H1 (cell line): ENCODE measurements at regions of chr12 and their contacts with region 1.

Region 1: GRCh38 chr12:57111031-57111734 is at the start of gene STAT6:
- DNase-seq: no peak
- H3K4me3 ChIP-seq: peak within 1 kb of the TSS; percentile 9 to 59 (median 50)
- H3K27ac ChIP-seq: peak within 1 kb of the TSS; percentile 87
- H3K4me1 ChIP-seq: peaks cover 3 to 31% (median 15%) of the 10 kb centered on the region in 4 experiments
- H3K27me3 ChIP-seq: no peaks in the 10 kb centered on the region
- CTCF ChIP-seq: no peak
- EP300 ChIP-seq: no peak
- POLR2A ChIP-seq: no peak
- RAD21 ChIP-seq: no peak
- total RNA-seq, gene STAT6: 26.8 and 32.9 TPM in 2 replicates

Region 2: DNA sequence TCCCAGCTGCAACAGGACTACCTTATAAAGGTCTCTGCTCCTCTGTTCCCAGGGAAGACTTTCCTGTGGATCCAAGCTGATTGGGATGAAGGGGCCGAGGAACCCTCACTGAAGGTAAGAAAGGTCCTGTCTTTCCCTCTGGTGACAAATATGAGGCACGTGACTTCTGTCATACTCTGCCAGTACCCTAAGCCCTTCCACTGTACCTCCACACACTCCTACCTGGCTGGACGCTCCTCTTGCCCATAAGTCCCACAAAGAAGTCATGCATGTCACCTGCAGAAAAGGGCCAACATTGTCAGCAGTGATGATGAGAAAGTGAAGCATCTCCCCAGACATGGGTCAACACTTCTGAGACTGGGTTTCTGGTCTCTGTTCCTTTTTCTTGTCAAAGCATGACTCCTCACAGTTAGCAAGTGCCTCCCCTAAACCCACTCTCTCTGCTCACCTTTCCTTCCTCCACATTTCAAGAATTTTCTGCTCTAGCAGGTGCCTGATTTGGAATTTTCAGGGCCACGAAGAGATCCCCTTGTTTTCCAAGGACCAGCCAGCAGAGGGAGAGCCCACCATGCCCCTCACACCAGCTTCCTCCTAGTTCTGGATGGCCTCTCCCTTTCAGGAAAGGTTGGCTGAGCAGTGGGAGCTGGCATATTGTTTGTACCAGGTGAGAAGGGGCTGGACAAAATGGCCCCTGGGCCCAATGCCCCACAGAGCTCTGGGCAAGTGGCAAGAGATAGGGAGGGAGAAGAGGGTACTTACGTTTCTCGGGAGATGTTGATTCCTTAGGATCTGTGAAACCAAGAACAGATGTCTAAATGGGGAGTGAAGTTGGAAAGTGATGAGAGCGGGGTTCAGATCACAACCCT is 98.3 kb before region 1 on chr12:
- CTCF ChIA-PET with region 1: interaction called, 21 read pairs
- POLR2A ChIA-PET with region 1: interaction called, 17 read pairs
- DNase-seq: no peak
- H3K4me3 ChIP-seq: no peak overlapping the region
- H3K27ac ChIP-seq: no peak overlapping the region
- H3K4me1 ChIP-seq: peaks cover 6 to 20% (median 15%) of the 10 kb centered on the region in 4 experiments
- H3K27me3 ChIP-seq: no peaks in the 10 kb centered on the region
- CTCF ChIP-seq: peak; percentile 41 to 59 (median 46)
- EP300 ChIP-seq: no peak
- POLR2A ChIP-seq: no peak
- RAD21 ChIP-seq: peak; percentile 60 to 62

Region 3: DNA sequence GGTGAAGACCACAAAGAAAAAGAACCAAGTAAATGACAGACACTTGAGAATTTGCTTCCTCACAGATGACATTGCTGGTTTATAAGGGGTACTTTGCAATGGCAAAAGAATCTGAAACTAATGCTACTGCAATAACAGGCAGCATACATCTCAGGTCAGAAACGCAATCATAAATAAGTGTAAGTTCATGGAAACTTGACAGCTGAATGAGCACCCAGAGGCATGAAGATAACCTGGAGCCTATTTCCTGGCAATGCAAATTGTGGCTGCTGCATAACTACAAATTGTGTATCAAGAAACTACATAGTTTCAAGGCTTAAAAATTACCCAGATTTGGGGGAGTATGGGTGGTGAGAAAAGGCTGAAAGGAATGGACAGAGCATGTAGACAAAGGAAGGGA is 52.7 kb before region 1 on chr12:
- CTCF ChIA-PET with region 1: interaction called, 55 read pairs
- POLR2A ChIA-PET with region 1: interaction called, 7 read pairs
- DNase-seq: no peak
- H3K4me3 ChIP-seq: no peak overlapping the region
- H3K27ac ChIP-seq: no peak overlapping the region
- H3K4me1 ChIP-seq: no peaks in the 10 kb centered on the region
- H3K27me3 ChIP-seq: no peaks in the 10 kb centered on the region
- CTCF ChIP-seq: no peak
- EP300 ChIP-seq: no peak
- POLR2A ChIP-seq: no peak
- RAD21 ChIP-seq: no peak

Region 4: GRCh38 chr12:57078519-57079404 is 32.4 kb before region 1 on chr12 and contains the start of gene NEMP1:
- CTCF ChIA-PET with region 1: interaction called, 225 read pairs
- POLR2A ChIA-PET with region 1: interaction called, 56 read pairs
- DNase-seq: peak; percentile 85 to 98
- H3K4me3 ChIP-seq: peak within 1 kb of the TSS; percentile 79 to 95 (median 87)
- H3K27ac ChIP-seq: peak within 1 kb of the TSS; percentile 43; the same call in 1 of the 2 replicates
- H3K4me1 ChIP-seq: peaks cover 0 to 3% (median 0%) of the 10 kb centered on the region in 4 experiments; a peak in 1 of 7 replicates
- H3K27me3 ChIP-seq: no peaks in the 10 kb centered on the region
- CTCF ChIP-seq: no peak
- EP300 ChIP-seq: no peak
- POLR2A ChIP-seq: peak; percentile 69 to 83
- RAD21 ChIP-seq: no peak
- total RNA-seq, gene NEMP1: 41.6 and 43.2 TPM in 2 replicates

Region 5: DNA sequence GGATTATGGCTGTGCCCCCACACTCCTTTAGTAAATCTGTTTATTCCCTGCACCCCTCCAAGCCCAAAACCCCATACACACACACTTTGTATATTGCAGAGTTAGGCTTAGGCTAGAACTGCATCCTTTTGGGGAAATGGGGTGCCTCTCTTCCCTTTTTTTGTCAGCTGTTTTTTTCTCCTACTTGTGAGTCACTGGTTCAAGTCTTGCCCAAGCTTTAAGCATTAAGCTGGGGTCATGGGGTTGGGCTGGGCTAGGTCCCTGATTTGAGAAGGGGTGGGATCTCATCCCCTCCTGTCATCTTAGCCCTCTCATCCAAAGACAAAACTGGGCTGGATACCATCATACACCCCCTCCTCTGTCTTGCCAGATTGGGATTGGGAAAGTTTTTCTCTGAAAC is 18.7 kb after region 1 on chr12:
- CTCF ChIA-PET with region 1: interaction called, 96 read pairs
- POLR2A ChIA-PET with region 1: interaction called, 105 read pairs
- DNase-seq: no peak
- H3K4me3 ChIP-seq: peak overlapping the region; percentile 80 to 93 (median 82)
- H3K27ac ChIP-seq: 0 out of 2 replicates have a peak overlapping the region, but pooled peaks have one; percentile 71
- H3K4me1 ChIP-seq: peaks cover 24 to 44% (median 30%) of the 10 kb centered on the region in 4 experiments
- H3K27me3 ChIP-seq: no peaks in the 10 kb centered on the region
- CTCF ChIP-seq: no peak
- EP300 ChIP-seq: no peak
- POLR2A ChIP-seq: no peak
- RAD21 ChIP-seq: no peak

Region 6: GRCh38 chr12:57238854-57239554 is 127.8 kb after region 1 on chr12:
- CTCF ChIA-PET with region 1: interaction called, 3 read pairs
- POLR2A ChIA-PET with region 1: interaction called, 14 read pairs
- DNase-seq: peak in 1 of 2 experiments; percentile 98
- H3K4me3 ChIP-seq: peak overlapping the region; percentile 42 to 67 (median 54)
- H3K27ac ChIP-seq: no peak overlapping the region
- H3K4me1 ChIP-seq: peaks cover 6 to 68% (median 45%) of the 10 kb centered on the region in 4 experiments
- H3K27me3 ChIP-seq: peaks cover 59 to 80% (median 74%) of the 10 kb centered on the region in 4 experiments
- CTCF ChIP-seq: peak in 2 of 3 experiments; percentile 100; a peak in 3 of 4 replicates
- EP300 ChIP-seq: peak in 1 of 2 experiments; percentile 59; a peak in 1 of 3 replicates
- POLR2A ChIP-seq: peak in 1 of 2 experiments; percentile 24; a peak in 1 of 3 replicates
- RAD21 ChIP-seq: peak; percentile 85 to 91

Region 7: GRCh38 chr12:57258977-57259970 is 148.1 kb after region 1 on chr12:
- CTCF ChIA-PET with region 1: no interaction called
- POLR2A ChIA-PET with region 1: no interaction called
- DNase-seq: no peak
- H3K4me3 ChIP-seq: no peak overlapping the region
- H3K27ac ChIP-seq: no peak overlapping the region
- H3K4me1 ChIP-seq: peaks cover 0 to 7% (median 3%) of the 10 kb centered on the region in 4 experiments; a peak in 5 of 7 replicates
- H3K27me3 ChIP-seq: no peaks in the 10 kb centered on the region
- CTCF ChIP-seq: no peak
- EP300 ChIP-seq: no peak
- POLR2A ChIP-seq: no peak
- RAD21 ChIP-seq: no peak